Cardiac septum (tissue), 1 donor: ENCODE measurements at regions of chr9 and their contacts with region 1.

Region 1: DNA sequence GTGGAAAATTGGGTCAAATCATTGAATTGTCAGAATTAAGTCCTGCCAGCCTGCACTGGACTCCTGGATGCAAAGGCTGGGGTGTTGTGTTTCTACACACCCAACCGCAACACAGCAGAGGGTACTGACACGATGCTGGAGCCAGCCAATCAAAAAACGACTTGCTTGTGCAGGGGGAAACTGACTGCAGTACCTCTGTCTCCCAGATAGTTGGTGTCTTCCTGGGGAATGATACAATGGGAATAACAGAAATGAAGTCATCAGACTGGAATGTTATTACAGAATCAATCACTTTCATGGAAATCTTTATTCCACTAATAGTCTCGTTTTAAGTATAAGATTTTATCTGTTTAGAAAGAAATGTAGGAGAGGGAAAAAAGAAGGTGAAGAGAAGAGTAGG is 330.3 kb downstream of the MLLT3 start:
- DNase-seq: no peak

Region 2: DNA sequence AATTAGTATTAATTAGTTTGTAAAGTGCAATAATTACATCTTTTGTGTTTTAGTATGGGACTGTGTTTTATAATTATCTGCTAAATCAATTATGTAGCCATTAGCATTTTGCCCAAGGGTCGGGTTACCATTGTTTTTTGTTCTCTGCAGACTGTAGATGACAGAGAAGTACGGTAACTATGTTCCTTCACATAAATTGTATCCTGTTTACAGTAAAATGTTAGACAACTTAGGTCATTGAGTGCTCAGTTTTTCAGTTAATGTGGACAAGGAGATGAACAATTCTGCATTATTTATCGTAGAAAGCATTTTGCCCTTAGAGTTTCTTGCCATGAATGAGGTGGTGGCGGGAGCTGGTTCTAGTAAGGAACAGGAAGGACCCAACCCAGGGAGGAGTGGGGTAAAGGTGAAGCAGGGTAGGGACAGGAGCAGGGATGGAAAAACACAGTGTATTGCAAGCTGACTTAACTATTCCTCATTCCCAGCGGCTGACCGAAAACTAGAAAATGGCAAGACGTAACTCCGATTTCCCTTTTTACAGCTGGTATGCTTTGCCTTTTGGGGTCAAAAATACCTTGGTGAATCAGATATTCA is 259.5 kb before region 1 on chr9:
- intact Hi-C with region 1: loop called (anchors 10 kb)
- DNase-seq: no peak

Region 3: GRCh38 chr9:20048985-20049384 is 243.0 kb before region 1 on chr9:
- intact Hi-C with region 1: no loop called
- DNase-seq: no peak